Dorsolateral prefrontal cortex (tissue), 120 donors: ENCODE measurements at regions of chr20 and their contacts with region 1.

Region 1: DNA sequence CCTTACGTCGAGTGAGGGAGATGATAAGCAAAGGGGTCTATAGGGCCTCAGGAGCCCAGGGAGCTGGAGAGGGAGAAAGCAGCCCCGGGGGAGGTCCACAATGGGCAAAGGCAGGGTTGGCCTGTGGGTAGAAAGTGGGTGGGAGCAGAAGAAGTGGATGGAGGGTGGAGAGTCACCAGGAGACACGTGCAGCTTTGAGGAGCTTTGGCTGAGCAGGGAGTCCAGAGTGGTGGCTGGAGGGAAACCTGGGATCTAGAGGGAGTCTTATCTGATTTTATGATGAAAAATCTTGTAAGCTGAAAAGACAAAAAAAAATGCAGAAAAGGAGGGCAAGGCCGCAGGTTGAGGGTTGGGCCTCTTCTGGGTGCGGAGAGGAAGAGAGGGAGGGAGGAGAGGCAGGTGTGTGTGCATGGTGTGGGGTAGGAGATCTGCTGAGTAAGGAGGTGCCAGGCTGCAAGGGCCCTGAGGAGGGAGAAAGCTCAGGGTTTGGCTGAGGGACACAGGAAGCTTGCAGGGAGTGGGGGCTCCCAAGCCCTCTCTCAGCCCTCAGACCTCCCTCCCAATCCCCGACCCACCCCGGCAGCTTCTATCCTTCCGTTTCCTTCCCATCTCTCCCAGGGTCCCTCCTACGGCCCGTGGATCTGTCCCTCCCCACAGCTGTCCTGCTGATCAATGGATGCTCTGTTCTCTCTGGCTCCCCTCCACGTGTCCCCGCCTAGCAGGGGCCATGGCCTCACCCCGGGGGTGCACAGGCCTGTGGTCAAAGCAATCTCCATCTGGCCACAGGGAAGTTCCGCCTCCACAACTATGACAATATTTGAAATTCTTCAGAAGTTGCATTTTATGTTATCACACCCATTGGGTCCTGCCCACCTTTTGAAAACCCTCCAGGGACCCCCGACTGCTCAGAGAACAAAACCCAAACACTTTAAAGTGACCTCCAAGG is 17.1 kb upstream of the BPI start:
- DNase-seq: peak; percentile 26 to 91 (median 86)
- H3K4me3 ChIP-seq: peak overlapping the region in 17 of 59 donors; percentile 7 to 38 (median 18)
- H3K27ac ChIP-seq: peak overlapping the region; percentile 25 to 96 (median 88)
- H3K27me3 ChIP-seq: no peaks in the 10 kb centered on the region
- CTCF ChIP-seq: peak in 8 of 56 donors; percentile 6 to 29 (median 18)

Region 2: DNA sequence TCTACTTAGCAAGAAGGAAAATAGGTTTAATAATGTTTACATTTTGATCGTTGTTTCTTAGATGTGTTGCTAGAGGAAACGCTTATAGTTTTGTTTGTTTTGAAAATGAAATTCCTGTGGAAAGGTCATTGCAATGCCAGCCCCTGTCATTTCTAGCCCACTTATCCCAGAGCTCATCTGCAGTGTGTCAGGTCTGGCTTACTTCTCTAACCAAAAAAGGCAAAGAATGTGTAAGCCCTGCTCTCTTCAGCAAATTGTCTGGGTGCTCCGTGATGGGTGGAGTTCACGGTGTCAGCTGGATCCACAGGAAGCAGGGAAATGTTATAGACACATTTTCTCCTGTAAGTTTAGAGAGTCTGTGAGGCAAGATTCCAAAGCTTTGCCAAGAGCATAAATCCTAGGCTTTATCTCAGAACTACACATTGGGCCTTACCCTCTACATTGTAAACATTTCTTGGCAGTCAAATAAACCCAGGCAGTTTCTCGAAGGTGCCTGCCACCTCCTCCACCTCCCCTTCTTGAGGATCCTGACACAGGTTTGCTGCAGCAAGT is 202.4 kb before region 1 on chr20:
- intact Hi-C with region 1: no loop called
- DNase-seq: no peak
- H3K4me3 ChIP-seq: no peak overlapping the region
- H3K27ac ChIP-seq: peak overlapping the region in 11 of 59 donors; percentile 1 to 57 (median 14)
- H3K27me3 ChIP-seq: no peaks in the 10 kb centered on the region
- CTCF ChIP-seq: no peak

Region 3: GRCh38 chr20:38152621-38153231 is 134.1 kb before region 1 on chr20:
- intact Hi-C with region 1: no loop called
- DNase-seq: peak in 3 of 10 donors; percentile 16 to 49 (median 31)
- H3K4me3 ChIP-seq: no peak overlapping the region
- H3K27ac ChIP-seq: peak overlapping the region in 31 of 59 donors; percentile 0 to 74 (median 42)
- H3K27me3 ChIP-seq: no peaks in the 10 kb centered on the region
- CTCF ChIP-seq: no peak

Region 4: GRCh38 chr20:38260378-38261053 is 26.3 kb before region 1 on chr20 and contains the start of gene KIAA1755:
- intact Hi-C with region 1: loop called (anchors 1 kb)
- DNase-seq: peak in 9 of 10 donors; percentile 58 to 82 (median 73)
- H3K4me3 ChIP-seq: peak within 1 kb of the TSS; percentile 29 to 90 (median 76)
- H3K27ac ChIP-seq: peak within 1 kb of the TSS; percentile 58 to 99 (median 97)
- H3K27me3 ChIP-seq: peaks cover 0 to 10% (median 0%) of the 10 kb centered on the region in 45 donors
- CTCF ChIP-seq: peak in 6 of 56 donors; percentile 4 to 33 (median 14)
- total RNA-seq, gene KIAA1755: 19.2 to 129 (median 51.1) TPM